Right cardiac atrium (tissue), 5 donors: ENCODE measurements at regions of chr2 and their contacts with region 1.

Region 1: DNA sequence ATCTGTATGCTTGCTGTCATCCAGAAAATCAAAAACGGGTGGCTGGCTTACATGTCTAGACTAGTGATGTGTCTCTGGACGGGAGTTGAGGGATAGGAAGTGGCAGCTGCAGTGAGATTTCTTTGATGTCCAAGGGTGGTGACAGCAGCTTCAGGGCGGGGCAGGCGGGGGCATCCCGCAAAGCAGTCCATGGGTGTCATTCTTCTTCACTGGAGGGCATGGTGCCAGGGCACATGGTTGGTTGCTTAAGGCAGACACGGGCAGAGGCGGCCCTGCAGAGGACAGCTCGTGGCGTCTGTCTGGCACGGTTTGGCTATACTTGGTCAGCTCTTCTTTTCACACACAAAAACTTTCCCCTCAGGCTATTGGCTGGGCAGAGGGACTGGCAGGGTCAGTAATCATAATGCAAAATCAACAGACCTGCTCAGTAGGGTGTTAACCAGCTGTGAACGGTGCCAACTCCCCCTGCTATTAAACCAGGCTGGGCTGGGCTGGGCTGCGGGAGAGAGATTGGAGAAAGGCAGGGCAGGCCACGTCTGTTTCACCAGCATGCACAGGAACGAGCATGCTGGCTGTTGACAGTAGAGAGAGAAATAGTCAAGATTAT is 63.7 kb downstream of the COL4A3 start:
- DNase-seq: peak; percentile 75 to 91 (median 91)
- ATAC-seq: peak; percentile 96
- H3K4me3 ChIP-seq: no peak overlapping the region
- H3K27ac ChIP-seq: peak overlapping the region; percentile 54
- H3K4me1 ChIP-seq: no peaks in the 10 kb centered on the region
- H3K27me3 ChIP-seq: no peaks in the 10 kb centered on the region

Region 2: GRCh38 chr2:227147023-227147422 is 81.1 kb before region 1 on chr2:
- intact Hi-C with region 1: no loop called
- DNase-seq: no peak
- ATAC-seq: no peak
- H3K4me3 ChIP-seq: no peak overlapping the region
- H3K27ac ChIP-seq: no peak overlapping the region
- H3K4me1 ChIP-seq: no peaks in the 10 kb centered on the region
- H3K27me3 ChIP-seq: no peaks in the 10 kb centered on the region

Region 3: DNA sequence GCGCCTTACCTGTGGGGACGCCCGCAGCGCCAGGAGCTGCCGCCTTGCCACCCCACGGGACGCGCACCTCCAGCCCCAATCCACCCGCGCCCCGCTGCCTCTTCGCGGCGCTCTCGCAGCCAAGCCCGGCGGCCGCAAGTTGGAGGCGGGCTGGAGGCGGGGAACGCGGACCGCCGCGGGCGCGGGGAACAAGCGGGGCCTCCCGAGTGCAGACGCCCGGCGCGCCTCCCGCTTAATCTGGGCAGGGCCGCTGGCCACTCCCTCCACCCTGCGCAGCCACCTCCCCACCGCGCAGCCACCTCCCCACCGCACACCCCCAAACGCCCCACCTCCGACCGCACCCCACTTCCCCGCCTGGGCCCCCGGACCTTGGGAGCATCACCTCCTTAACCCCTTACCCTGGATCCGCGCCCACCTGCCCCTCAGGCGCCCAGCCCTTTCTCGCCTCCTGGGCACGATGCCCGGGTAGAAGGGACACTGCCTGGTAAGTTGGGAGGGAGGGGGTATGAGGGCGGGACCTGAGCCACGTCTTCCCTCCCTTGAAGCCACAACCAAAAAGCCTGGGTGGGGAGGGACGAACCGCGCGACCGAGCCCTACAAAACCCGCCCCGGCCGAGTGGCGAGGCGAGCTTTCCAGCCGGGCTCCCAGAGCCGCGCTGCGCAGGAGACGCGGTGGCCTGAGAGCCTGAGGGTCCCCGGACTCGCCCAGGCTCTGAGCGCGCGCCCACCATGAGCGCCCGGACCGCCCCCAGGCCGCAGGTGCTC is 64.0 kb before region 1 on chr2 and contains the starts of genes COL4A3 and COL4A4:
- intact Hi-C with region 1: loop called in 1 of 4 experiments (anchors 2 kb)
- DNase-seq: peak; percentile 81 to 93 (median 91)
- ATAC-seq: peak; percentile 95 to 96
- H3K4me3 ChIP-seq: peak within 1 kb of the TSS; percentile 84
- H3K27ac ChIP-seq: peak within 1 kb of the TSS; percentile 55
- H3K4me1 ChIP-seq: no peaks in the 10 kb centered on the region
- H3K27me3 ChIP-seq: no peaks in the 10 kb centered on the region
- total RNA-seq, gene COL4A3: 6.2 to 11.0 (median 7.1) TPM
- total RNA-seq, gene COL4A4: 13.1 to 17.2 (median 15.3) TPM

Region 4: DNA sequence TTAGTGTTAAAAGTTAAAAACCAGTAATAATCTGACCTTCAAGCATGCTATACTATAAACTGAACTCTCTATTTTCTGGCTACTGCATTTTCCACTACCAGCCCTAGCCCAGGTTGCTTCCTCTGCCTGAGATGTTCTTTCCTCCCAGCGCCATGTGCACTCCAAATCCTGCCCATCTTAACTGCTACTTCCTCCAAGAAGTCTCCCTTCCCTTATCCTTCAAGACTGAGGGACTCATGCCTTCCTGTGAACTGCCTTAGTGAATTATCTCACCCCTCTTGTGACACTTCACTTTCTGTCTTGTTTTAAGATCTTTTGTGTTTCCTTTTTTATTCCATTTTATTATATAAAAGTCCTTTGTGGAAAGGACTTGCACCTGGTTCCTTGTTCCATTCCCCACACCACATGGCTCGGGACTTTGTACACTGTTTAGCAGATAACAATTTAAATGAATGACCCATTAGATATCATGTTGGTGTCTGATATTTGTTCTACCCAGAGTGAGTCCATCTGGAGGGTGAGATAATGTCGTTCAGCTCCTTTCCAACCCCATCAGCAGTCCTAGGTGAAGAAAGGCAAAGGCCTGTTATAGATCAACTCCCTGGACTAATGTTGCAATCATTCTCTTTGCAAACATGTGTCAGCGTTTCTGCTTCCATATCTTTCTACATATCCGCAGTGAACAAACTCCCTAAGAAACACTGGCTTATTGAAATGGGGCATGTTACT is 222.9 kb after region 1 on chr2:
- intact Hi-C with region 1: no loop called
- DNase-seq: no peak
- ATAC-seq: peak; percentile 94 to 96
- H3K4me3 ChIP-seq: no peak overlapping the region
- H3K27ac ChIP-seq: peak overlapping the region; percentile 16
- H3K4me1 ChIP-seq: peaks cover 1% of the 10 kb centered on the region
- H3K27me3 ChIP-seq: no peaks in the 10 kb centered on the region